ENCODE measurements at regions of chr1 and their contacts with region 1.

Region 1: DNA sequence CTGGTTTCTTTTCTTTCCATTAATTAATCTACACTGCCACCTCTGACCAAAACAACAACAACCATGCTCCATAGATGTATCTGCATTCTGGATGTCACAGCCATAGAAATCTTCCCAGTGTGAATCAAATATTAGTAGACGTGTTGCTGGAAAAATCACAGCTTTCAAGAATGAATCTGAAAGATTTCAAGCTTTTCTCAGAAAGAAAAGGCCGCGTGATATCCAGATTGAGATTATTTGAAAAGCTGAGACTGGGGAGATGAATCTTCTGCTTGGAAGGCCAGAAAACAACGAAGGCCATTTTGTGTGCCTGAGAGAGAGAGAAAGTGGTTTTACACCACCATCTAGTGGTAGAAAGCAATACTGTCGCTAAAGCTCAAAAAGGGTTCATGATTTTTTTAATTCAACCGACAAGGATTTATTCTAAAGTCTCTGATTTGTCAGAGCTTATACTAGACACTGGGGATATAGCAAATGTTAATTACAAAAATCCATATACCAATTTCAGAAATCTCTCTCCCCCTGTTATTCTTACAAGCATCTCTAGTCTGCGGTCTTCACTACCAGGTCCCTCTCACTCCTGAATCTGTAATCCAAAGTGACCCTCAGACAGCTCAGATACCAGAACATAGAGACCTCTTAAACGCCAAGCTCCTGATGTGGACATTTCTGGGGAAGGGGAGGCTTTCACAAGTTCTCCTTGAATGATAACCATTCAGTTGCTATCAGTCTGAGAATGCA is 87.5 kb upstream of the SGIP1 start:
- DNase-seq: peak; percentile 84 to 92 (median 86)
- H3K4me3 ChIP-seq: no peak overlapping the region
- H3K27ac ChIP-seq: peak overlapping the region in 1 of 2 experiments; percentile 73
- H3K4me1 ChIP-seq: peaks cover 12 to 31% (median 19%) of the 10 kb centered on the region in 4 experiments
- H3K27me3 ChIP-seq: no peaks in the 10 kb centered on the region

Region 2: GRCh38 chr1:66258404-66259105 is 187.9 kb before region 1 on chr1:
- CTCF ChIA-PET with region 1: interaction called, 374 read pairs
- POLR2A ChIA-PET with region 1: no interaction called
- DNase-seq: no peak
- H3K4me3 ChIP-seq: no peak overlapping the region
- H3K27ac ChIP-seq: no peak overlapping the region
- H3K4me1 ChIP-seq: peaks cover 0 to 20% (median 9%) of the 10 kb centered on the region in 4 experiments
- H3K27me3 ChIP-seq: no peaks in the 10 kb centered on the region

Region 3: GRCh38 chr1:66300972-66301451 is 145.4 kb before region 1 on chr1:
- CTCF ChIA-PET with region 1: interaction called, 10 read pairs
- POLR2A ChIA-PET with region 1: no interaction called
- DNase-seq: peak; percentile 67 to 90 (median 84)
- H3K4me3 ChIP-seq: peak overlapping the region in 4 of 7 experiments; percentile 30 to 69 (median 36)
- H3K27ac ChIP-seq: peak overlapping the region; percentile 42 to 72
- H3K4me1 ChIP-seq: peaks cover 20 to 38% (median 29%) of the 10 kb centered on the region in 4 experiments
- H3K27me3 ChIP-seq: no peaks in the 10 kb centered on the region

Region 4: GRCh38 chr1:66360285-66360724 is 86.1 kb before region 1 on chr1:
- CTCF ChIA-PET with region 1: interaction called, 28 read pairs
- POLR2A ChIA-PET with region 1: interaction called, 3 read pairs
- DNase-seq: peak; percentile 44 to 56 (median 49)
- H3K4me3 ChIP-seq: no peak overlapping the region
- H3K27ac ChIP-seq: no peak overlapping the region
- H3K4me1 ChIP-seq: peaks cover 0 to 5% (median 3%) of the 10 kb centered on the region in 4 experiments
- H3K27me3 ChIP-seq: no peaks in the 10 kb centered on the region

Region 5: GRCh38 chr1:66503841-66504470 is 57.5 kb after region 1 on chr1:
- CTCF ChIA-PET with region 1: interaction called, 17 read pairs
- POLR2A ChIA-PET with region 1: no interaction called
- DNase-seq: peak; percentile 49 to 77 (median 69)
- H3K4me3 ChIP-seq: no peak overlapping the region
- H3K27ac ChIP-seq: no peak overlapping the region
- H3K4me1 ChIP-seq: no peaks in the 10 kb centered on the region
- H3K27me3 ChIP-seq: no peaks in the 10 kb centered on the region

Region 6: GRCh38 chr1:66954208-66954607 is 507.8 kb after region 1 on chr1:
- CTCF ChIA-PET with region 1: no interaction called
- POLR2A ChIA-PET with region 1: no interaction called
- DNase-seq: no peak
- H3K4me3 ChIP-seq: no peak overlapping the region
- H3K27ac ChIP-seq: no peak overlapping the region
- H3K4me1 ChIP-seq: no peaks in the 10 kb centered on the region
- H3K27me3 ChIP-seq: no peaks in the 10 kb centered on the region

Measured in common myeloid progenitor, CD34-positive (primary cell).